Panc1 (cell line): ENCODE measurements at regions of chr6 and their contacts with region 1.

Region 1: GRCh38 chr6:147390909-147391536 is 117.5 kb upstream of the SAMD5 start:
- DNase-seq: no peak
- ATAC-seq: no peak
- H3K4me3 ChIP-seq: no peak overlapping the region
- H3K27ac ChIP-seq: no peak overlapping the region
- H3K4me1 ChIP-seq: peaks cover 23% of the 10 kb centered on the region; the same call in 1 of the 2 replicates
- H3K27me3 ChIP-seq: no peaks in the 10 kb centered on the region
- CTCF ChIP-seq: peak; percentile 55; the same call in 1 of the 2 replicates

Region 2: GRCh38 chr6:148074738-148075137 is 683.7 kb after region 1 on chr6:
- CTCF ChIA-PET with region 1: interaction called, 10 read pairs
- POLR2A ChIA-PET with region 1: no interaction called
- in situ Hi-C with region 1: no loop called
- intact Hi-C with region 1: no loop called
- DNase-seq: no peak
- ATAC-seq: no peak
- H3K4me3 ChIP-seq: no peak overlapping the region
- H3K27ac ChIP-seq: no peak overlapping the region
- H3K4me1 ChIP-seq: no peaks in the 10 kb centered on the region
- H3K27me3 ChIP-seq: no peaks in the 10 kb centered on the region
- CTCF ChIP-seq: no peak

Region 3: GRCh38 chr6:148177589-148178233 is 786.7 kb after region 1 on chr6:
- CTCF ChIA-PET with region 1: no interaction called
- POLR2A ChIA-PET with region 1: no interaction called
- in situ Hi-C with region 1: no loop called
- intact Hi-C with region 1: no loop called
- DNase-seq: no peak
- ATAC-seq: no peak
- H3K4me3 ChIP-seq: no peak overlapping the region
- H3K27ac ChIP-seq: no peak overlapping the region
- H3K4me1 ChIP-seq: no peaks in the 10 kb centered on the region
- H3K27me3 ChIP-seq: no peaks in the 10 kb centered on the region
- CTCF ChIP-seq: peak; percentile 81